Activated T-helper 1 cell treated with anti-CD3 and anti-CD28 coated beads, Interleukin-12 subunit alpha, Interleukin-12 subunit beta, Interleukin-2, Interleukin-4 antibody, amounts not matched to agents 30 ng/mL and 10 ng/mL and 1 ng/mL, durations not matched to agents 14 hours and 24 hours and 36 hours (primary cell): ENCODE measurements at regions of chr1 and their contacts with region 1.

Region 1: DNA sequence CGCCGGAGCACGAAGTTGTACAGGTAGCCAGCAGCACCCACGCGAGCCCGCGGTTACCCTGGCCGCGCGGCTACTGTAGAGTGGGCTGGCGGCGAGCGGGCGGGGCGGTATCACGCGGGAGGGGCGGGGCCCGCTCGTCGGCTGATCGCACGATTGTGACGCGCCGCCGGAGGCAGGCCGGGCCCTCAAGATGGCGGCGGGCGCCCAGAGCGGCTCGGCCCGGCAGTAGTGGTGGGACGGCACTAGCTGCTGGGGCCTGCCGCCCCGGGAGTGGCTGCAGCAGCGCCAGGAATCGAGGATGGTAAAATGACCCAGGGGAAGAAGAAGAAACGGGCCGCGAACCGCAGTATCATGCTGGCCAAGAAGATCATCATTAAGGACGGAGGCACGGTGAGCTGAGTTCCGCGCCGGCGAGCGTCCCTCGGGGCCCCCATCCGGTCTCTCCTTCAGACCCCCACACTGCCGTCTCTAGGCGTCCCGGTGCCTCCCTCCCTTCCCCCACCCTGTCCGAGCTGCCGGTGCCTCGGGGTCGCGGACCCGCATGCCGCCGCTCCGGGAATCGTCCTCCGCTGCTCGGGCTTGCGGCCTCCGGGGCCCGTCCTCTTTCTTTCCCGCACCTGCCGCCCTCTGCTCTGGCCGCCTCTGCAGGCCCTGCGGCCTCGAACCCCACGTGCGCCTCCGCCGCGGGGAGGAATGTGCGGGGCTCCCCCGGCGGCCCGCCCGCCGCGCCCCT is 68.3 kb downstream of the SLC35A3 start:
- DNase-seq: peak; percentile 85
- H3K4me3 Mint-ChIP-seq: peak overlapping the region; percentile 97
- H3K27ac Mint-ChIP-seq: peak overlapping the region; percentile 98
- H3K4me1 Mint-ChIP-seq: peaks cover 60% of the 10 kb centered on the region
- H3K27me3 Mint-ChIP-seq: no peaks in the 10 kb centered on the region

Region 2: GRCh38 chr1:99969729-99970621 is 68.1 kb before region 1 on chr1 and contains the start of gene SLC35A3:
- intact Hi-C with region 1: loop called (anchors 1 kb)
- DNase-seq: peak; percentile 73
- H3K4me3 Mint-ChIP-seq: peak within 1 kb of the TSS; percentile 99
- H3K27ac Mint-ChIP-seq: peak within 1 kb of the TSS; percentile 95
- H3K4me1 Mint-ChIP-seq: peaks cover 22% of the 10 kb centered on the region
- H3K27me3 Mint-ChIP-seq: no peaks in the 10 kb centered on the region
- total RNA-seq, gene SLC35A3: 16.0 and 16.3 TPM in 2 replicates

Region 3: GRCh38 chr1:100249537-100250257 is 211.6 kb after region 1 on chr1 and contains the start of gene DBT:
- intact Hi-C with region 1: loop called (anchors 5 kb)
- DNase-seq: peak; percentile 92
- H3K4me3 Mint-ChIP-seq: no peak within 1 kb of the TSS
- H3K27ac Mint-ChIP-seq: no peak within 1 kb of the TSS
- H3K4me1 Mint-ChIP-seq: peaks cover 10% of the 10 kb centered on the region
- H3K27me3 Mint-ChIP-seq: peaks cover 12% of the 10 kb centered on the region
- total RNA-seq, gene DBT: 11.3 and 11.7 TPM in 2 replicates

Region 4: GRCh38 chr1:100377590-100378361 is 339.7 kb after region 1 on chr1:
- intact Hi-C with region 1: loop called (anchors 5 kb)
- DNase-seq: no peak
- H3K4me3 Mint-ChIP-seq: peak overlapping the region; percentile 38
- H3K27ac Mint-ChIP-seq: peak overlapping the region; percentile 75
- H3K4me1 Mint-ChIP-seq: peaks cover 55% of the 10 kb centered on the region
- H3K27me3 Mint-ChIP-seq: peaks cover 2% of the 10 kb centered on the region

Region 5: GRCh38 chr1:100459358-100460114 is 421.4 kb after region 1 on chr1:
- intact Hi-C with region 1: loop called (anchors 2 kb)
- DNase-seq: peak; percentile 55
- H3K4me3 Mint-ChIP-seq: no peak overlapping the region
- H3K27ac Mint-ChIP-seq: no peak overlapping the region
- H3K4me1 Mint-ChIP-seq: peaks cover 43% of the 10 kb centered on the region
- H3K27me3 Mint-ChIP-seq: no peaks in the 10 kb centered on the region

Region 6: DNA sequence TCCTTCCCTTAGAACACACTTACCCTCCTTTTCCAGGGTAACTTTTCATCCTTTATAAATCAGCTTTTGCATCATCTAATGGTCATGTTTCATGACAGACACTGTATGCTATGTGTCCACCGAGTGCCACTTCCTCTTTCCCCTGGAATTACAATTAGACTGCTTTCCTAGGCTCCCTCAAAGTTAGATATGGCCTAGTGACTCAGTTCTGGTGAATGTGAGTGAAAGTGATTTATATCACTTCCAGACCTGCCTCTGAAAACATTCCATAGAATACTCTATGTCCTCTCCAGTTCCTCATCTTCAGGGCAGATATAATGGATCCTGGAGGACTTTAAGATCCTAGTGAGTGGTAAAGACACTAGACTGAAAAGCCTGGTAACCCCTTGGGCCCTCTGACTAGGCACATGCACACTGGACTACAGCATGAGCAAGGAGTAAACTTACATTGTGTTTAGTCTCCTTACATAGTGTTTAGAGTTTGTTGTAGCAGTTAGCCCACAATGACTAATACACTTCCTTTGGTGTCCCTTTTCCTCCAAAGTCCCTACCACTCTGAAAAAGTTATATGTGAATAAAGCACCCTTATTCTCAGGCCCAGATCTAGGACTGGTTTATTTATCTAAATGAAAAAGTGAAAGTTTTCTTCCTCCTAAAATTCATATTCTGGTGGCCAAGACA is 559.1 kb after region 1 on chr1:
- intact Hi-C with region 1: no loop called
- DNase-seq: no peak
- H3K4me3 Mint-ChIP-seq: no peak overlapping the region
- H3K27ac Mint-ChIP-seq: no peak overlapping the region
- H3K4me1 Mint-ChIP-seq: no peaks in the 10 kb centered on the region
- H3K27me3 Mint-ChIP-seq: peaks cover 2% of the 10 kb centered on the region